ENCODE measurements at regions of chr17 and their contacts with region 1.

Region 1: DNA sequence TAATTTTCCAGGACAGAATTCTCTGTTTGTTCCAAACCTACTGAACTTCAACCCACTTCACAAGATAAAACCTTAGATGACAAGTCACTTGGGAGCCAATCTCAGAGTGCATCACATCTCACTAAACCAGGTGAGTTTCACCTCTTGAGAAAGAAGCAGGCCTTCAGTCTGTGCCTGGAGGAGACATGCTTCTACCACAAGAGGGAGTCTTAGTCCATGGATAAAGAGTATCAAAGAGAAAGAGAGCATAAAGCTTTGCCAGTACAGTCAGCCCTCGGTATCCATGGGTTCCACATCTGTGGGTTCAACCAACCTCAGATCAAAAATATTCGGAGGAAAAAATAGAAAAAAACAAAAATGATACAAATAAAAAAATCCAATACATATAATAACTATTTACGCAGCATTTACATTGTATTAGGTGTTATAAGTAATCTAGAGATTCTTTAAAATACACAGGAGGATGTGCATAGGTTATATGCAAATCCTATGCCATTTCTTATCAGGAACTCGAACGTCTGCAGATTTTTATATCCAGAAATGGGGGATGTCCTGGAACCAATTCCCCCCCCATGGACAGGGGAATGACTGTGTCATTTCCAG is 37.7 kb downstream of the DUSP14 start:
- DNase-seq: no peak
- ATAC-seq: no peak

Region 2: DNA sequence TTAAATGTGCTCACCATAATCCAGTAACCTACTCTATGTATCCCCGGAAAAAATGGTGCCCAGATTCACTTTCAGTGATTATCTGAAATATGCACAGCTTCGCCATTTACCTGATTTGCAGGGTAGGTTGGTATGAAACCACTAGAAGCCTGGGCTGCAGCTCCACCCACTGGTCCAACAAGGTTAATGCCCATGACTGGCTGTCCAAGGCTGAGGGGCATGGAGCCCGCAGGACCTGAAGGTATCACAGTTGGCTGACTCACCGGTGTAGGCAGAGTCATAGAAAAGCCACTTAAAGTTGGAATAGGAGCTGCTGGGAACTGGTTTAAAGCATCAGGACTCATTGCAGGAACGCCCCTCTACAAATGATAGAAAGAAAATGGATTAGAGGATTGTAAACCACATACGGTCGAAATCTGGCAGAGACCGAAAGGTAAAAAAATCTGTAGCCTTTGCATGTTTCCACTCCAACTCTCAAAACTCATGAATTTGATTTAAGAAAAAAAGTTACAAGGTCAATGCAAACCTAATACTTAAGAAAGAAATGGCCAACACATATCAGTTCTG is 43.3 kb after region 1 on chr17:
- intact Hi-C with region 1: loop called (anchors 5 kb)
- DNase-seq: no peak
- ATAC-seq: peak; percentile 54

Measured in Right ventricle myocardium inferior (tissue), 1 donor.